Activated CD4-positive, alpha-beta T cell treated with anti-CD3 and anti-CD28 coated beads, Interleukin-2, amount 10 ng/mL, durations not matched to agents 24 days and 14 days (primary cell): ENCODE measurements at regions of chr16 and their contacts with region 1.

Region 1: DNA sequence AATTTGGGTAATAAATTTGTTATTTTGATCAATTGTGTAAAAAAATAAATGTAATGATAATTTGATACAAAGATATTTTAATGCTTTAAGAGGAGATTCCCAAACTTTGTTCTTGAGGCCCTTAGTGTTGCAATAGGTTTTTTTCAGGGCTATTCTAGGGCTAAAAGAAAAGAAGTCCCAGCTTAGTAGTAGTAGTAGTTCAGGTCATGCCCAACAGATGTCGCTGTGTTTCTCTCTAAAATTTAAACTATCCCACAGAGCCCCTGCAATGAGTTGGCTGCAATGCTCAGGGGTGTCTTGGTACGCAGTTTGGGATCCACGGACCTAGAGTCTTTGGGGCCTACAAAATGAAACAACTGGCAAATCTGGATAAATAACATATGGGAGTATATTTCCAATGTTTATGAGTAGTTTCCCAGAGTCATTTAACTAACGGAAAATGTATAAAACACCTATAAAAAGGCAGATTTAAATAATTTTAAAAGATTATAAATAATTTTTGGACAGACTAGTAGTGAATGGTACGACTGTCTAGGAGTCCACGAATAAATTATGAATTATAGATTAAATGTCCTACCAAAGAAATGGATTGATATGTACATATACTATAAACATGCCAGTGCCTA is 228.4 kb upstream of the PMFBP1 start:
- DNase-seq: peak; percentile 77
- H3K4me3 Mint-ChIP-seq: no peak overlapping the region
- H3K27ac Mint-ChIP-seq: no peak overlapping the region
- H3K4me1 Mint-ChIP-seq: no peaks in the 10 kb centered on the region
- H3K27me3 Mint-ChIP-seq: no peaks in the 10 kb centered on the region

Region 2: GRCh38 chr16:72442385-72443158 is 42.2 kb after region 1 on chr16:
- intact Hi-C with region 1: no loop called
- DNase-seq: no peak
- H3K4me3 Mint-ChIP-seq: no peak overlapping the region
- H3K27ac Mint-ChIP-seq: no peak overlapping the region
- H3K4me1 Mint-ChIP-seq: no peaks in the 10 kb centered on the region
- H3K27me3 Mint-ChIP-seq: no peaks in the 10 kb centered on the region

Region 3: DNA sequence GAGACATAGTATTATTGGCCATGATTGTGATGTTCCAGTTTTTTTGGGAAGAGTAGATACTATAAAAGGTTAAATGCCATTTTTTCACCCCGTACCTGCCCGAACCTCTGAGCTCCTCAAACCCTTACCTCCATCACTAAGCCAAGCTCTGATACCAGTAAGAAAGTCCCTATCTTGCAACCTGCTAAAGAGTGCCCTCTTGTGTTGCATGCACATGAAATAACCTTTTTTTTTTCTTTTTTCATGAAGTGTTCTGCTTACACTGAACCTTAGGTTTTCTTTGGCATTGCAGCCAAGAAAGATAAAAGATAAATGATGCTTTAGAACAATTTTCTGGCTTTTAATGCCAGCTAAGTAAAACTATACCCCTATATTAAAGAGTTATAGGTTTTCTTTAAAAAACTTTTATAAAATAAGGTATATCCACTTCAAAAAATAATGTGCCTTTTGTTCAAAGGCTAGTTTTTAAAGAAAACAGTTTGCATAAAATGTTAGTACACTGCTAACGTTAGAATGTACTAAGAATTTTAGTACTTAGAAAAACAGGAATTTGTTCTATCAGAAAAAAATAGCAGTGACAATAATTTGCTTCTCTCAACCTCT is 66.9 kb after region 1 on chr16:
- intact Hi-C with region 1: loop called (anchors 2 kb)
- DNase-seq: no peak
- H3K4me3 Mint-ChIP-seq: no peak overlapping the region
- H3K27ac Mint-ChIP-seq: no peak overlapping the region
- H3K4me1 Mint-ChIP-seq: no peaks in the 10 kb centered on the region
- H3K27me3 Mint-ChIP-seq: peaks cover 3% of the 10 kb centered on the region